Ascending aorta (tissue), 2 donors: ENCODE measurements at regions of chr12 and their contacts with region 1.

Region 1: DNA sequence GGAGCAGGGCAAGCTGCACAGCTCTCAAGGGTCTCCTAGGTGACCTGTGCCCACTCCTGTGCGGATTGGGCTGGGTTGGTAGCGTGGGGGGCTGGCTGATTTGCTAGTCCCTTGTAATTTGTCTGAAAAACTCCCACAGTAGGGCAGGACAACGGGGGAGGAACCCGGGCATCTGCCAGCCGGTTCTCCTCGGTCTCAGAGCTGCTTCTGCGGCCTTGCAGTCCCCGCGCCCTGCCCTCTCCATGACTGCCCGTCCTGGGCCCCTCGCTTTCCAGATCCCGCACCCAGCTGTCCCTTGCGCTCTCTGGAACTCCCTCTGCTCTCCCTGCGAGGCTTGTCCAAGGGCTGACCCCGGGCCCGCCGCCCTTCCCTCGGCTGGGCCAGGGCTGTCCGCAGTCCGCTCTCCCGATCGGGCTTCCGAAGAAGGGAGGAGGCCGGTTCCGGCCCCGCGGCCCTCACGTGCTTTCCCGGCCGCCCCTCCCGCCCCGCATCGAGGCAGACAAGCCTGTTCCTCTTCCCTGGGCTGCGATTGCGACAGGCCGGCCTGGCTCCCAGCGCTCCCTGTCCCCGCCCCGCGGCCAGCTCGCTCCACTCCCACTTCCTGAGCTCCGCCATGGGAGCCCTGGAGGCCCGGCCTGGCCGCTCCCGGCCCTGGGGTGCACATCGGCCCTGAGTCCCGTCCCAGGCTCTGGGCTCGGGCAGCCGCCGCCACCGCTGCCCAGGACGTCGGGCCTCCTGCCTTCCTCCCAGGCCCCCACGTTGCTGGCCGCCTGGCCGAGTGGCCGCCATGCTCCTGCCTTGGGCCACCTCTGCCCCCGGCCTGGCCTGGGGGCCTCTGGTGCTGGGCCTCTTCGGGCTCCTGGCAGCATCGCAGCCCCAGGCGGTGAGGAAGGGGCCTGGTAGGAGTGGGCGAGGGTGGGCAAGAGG is at the start of gene LTBR:
- DNase-seq: peak; percentile 78 to 98
- H3K4me3 ChIP-seq: peak within 1 kb of the TSS; percentile 80 to 89
- H3K27ac ChIP-seq: peak within 1 kb of the TSS; percentile 97 to 98
- H3K4me1 ChIP-seq: peaks cover 9 to 25% of the 10 kb centered on the region in 2 donors
- H3K27me3 ChIP-seq: no peaks in the 10 kb centered on the region
- CTCF ChIP-seq: peak in 1 of 3 experiments; percentile 22
- total RNA-seq, gene LTBR: 284 TPM

Region 2: GRCh38 chr12:6323340-6323994 is 60.4 kb before region 1 on chr12:
- intact Hi-C with region 1: loop called (anchors 5 kb)
- DNase-seq: peak in 1 of 2 donors; percentile 86
- H3K4me3 ChIP-seq: peak overlapping the region in 1 of 2 donors; percentile 44
- H3K27ac ChIP-seq: peak overlapping the region; percentile 75 to 81
- H3K4me1 ChIP-seq: peaks cover 5 to 30% of the 10 kb centered on the region in 2 donors
- H3K27me3 ChIP-seq: no peaks in the 10 kb centered on the region
- CTCF ChIP-seq: peak; percentile 40 to 56 (median 56)

Region 3: GRCh38 chr12:6335451-6336078 is 48.3 kb before region 1 on chr12:
- intact Hi-C with region 1: loop called (anchors 1 kb)
- DNase-seq: peak; percentile 65 to 94
- H3K4me3 ChIP-seq: peak overlapping the region; percentile 90 to 93
- H3K27ac ChIP-seq: peak overlapping the region; percentile 97 to 98
- H3K4me1 ChIP-seq: peaks cover 24 to 52% of the 10 kb centered on the region in 2 donors
- H3K27me3 ChIP-seq: no peaks in the 10 kb centered on the region
- CTCF ChIP-seq: peak; percentile 43 to 71 (median 69)